ENCODE measurements at regions of chr1 and their contacts with region 1.

Region 1: DNA sequence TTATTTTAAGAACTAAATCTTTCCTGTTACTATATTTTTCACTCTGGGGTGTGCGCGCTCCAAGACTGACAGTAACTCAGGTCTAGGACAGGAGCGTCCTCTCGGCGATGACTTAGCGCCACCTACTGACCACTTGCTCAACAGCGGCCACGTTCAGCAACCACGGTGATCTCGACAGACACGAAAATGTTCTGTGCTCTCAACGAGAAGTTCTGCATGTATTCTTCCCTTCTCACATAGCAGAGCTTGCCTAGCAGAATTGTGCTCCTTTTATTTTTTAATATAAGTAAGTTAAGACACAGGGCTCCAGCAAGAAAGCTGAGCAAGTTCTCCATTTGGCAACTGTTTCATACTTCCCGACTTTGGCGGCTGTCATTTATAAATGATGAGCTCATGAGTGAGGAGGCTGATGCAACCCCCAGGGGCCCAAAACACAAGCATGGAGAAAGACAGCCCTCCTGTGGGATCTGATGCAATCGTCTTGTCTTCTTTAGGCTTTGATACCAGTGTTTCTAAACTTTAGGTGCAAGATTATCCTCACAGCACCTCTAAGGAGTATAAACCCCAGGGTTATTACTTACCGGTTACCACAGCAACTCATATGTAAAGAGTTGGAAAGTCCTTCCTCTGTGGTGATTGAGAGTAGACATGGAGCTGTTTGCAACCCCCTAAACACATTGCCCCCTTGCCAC is 92.6 kb downstream of the HHIPL2 start:
- DNase-seq: peak; percentile 97
- H3K4me3 Mint-ChIP-seq: peak overlapping the region; percentile 37
- H3K27ac Mint-ChIP-seq: peak overlapping the region; percentile 54
- H3K4me1 Mint-ChIP-seq: peaks cover 16% of the 10 kb centered on the region
- H3K27me3 Mint-ChIP-seq: no peaks in the 10 kb centered on the region
- CTCF ChIP-seq: peak; percentile 100

Region 2: GRCh38 chr1:220873868-220874655 is 1581.3 kb before region 1 on chr1:
- CTCF ChIA-PET with region 1: interaction called, 12 read pairs
- POLR2A ChIA-PET with region 1: interaction called, 3 read pairs
- intact Hi-C with region 1: loop called (anchors 1 kb)
- DNase-seq: peak; percentile 74
- H3K4me3 Mint-ChIP-seq: no peak overlapping the region
- H3K27ac Mint-ChIP-seq: no peak overlapping the region
- H3K4me1 Mint-ChIP-seq: no peaks in the 10 kb centered on the region
- H3K27me3 Mint-ChIP-seq: no peaks in the 10 kb centered on the region
- CTCF ChIP-seq: peak; percentile 99

Region 3: GRCh38 chr1:221543529-221544120 is 911.7 kb before region 1 on chr1:
- CTCF ChIA-PET with region 1: interaction called, 35 read pairs
- POLR2A ChIA-PET with region 1: no interaction called
- intact Hi-C with region 1: loop called (anchors 1 kb)
- DNase-seq: peak; percentile 56
- H3K4me3 Mint-ChIP-seq: no peak overlapping the region
- H3K27ac Mint-ChIP-seq: peak overlapping the region; percentile 44
- H3K4me1 Mint-ChIP-seq: peaks cover 15% of the 10 kb centered on the region
- H3K27me3 Mint-ChIP-seq: no peaks in the 10 kb centered on the region
- CTCF ChIP-seq: peak; percentile 86

Region 4: DNA sequence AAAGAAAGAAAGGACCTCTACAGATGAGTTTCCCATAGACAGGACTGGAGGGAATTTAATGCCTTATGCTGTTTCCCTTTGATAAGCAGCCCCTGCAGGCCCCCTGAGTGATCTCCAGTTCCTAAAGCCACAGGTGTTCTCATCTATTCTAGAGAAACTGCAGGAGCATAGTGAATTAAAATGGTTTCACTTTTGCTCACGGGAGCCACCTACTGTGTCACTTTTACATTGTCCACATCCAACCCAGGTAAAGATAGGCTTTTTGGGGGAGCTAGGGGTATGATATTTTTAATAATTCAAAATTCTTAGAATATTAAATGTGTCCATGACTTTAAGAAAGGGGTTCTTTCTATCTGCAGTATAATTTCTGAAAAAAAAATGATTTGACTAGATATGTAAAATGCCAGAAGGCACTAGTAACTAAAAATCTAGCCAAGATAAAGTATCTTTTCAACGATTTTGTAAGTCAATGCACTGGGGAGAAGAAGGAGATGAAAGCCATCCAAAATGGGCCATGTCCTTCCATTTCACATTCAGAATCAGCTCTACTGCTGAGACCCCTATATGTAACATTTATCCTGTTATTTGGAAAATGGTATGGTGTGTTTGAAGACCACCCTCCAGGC is 446.1 kb before region 1 on chr1:
- CTCF ChIA-PET with region 1: interaction called, 38 read pairs
- POLR2A ChIA-PET with region 1: no interaction called
- intact Hi-C with region 1: loop called (anchors 1 kb)
- DNase-seq: peak; percentile 77
- H3K4me3 Mint-ChIP-seq: no peak overlapping the region
- H3K27ac Mint-ChIP-seq: peak overlapping the region; percentile 24
- H3K4me1 Mint-ChIP-seq: no peaks in the 10 kb centered on the region
- H3K27me3 Mint-ChIP-seq: no peaks in the 10 kb centered on the region
- CTCF ChIP-seq: peak; percentile 86

Region 5: GRCh38 chr1:222171005-222171404 is 284.3 kb before region 1 on chr1:
- CTCF ChIA-PET with region 1: interaction called, 43 read pairs
- POLR2A ChIA-PET with region 1: interaction called, 4 read pairs
- intact Hi-C with region 1: loop called (anchors 1 kb)
- DNase-seq: peak; percentile 67
- H3K4me3 Mint-ChIP-seq: no peak overlapping the region
- H3K27ac Mint-ChIP-seq: no peak overlapping the region
- H3K4me1 Mint-ChIP-seq: peaks cover 16% of the 10 kb centered on the region
- H3K27me3 Mint-ChIP-seq: no peaks in the 10 kb centered on the region
- CTCF ChIP-seq: peak; percentile 86

Region 6: GRCh38 chr1:222288040-222288439 is 167.3 kb before region 1 on chr1:
- CTCF ChIA-PET with region 1: interaction called, 28 read pairs
- POLR2A ChIA-PET with region 1: interaction called, 4 read pairs
- intact Hi-C with region 1: loop called (anchors 1 kb)
- DNase-seq: peak; percentile 97
- H3K4me3 Mint-ChIP-seq: peak overlapping the region; percentile 19
- H3K27ac Mint-ChIP-seq: peak overlapping the region; percentile 68
- H3K4me1 Mint-ChIP-seq: peaks cover 35% of the 10 kb centered on the region
- H3K27me3 Mint-ChIP-seq: no peaks in the 10 kb centered on the region
- CTCF ChIP-seq: peak; percentile 15

Region 7: GRCh38 chr1:222465211-222466041 is 10.1 kb after region 1 on chr1:
- CTCF ChIA-PET with region 1: interaction called, 66 read pairs
- POLR2A ChIA-PET with region 1: interaction called, 6 read pairs
- intact Hi-C with region 1: no loop called
- DNase-seq: peak; percentile 98
- H3K4me3 Mint-ChIP-seq: peak overlapping the region; percentile 67
- H3K27ac Mint-ChIP-seq: peak overlapping the region; percentile 92
- H3K4me1 Mint-ChIP-seq: peaks cover 14% of the 10 kb centered on the region
- H3K27me3 Mint-ChIP-seq: no peaks in the 10 kb centered on the region
- CTCF ChIP-seq: peak; percentile 100

Region 8: DNA sequence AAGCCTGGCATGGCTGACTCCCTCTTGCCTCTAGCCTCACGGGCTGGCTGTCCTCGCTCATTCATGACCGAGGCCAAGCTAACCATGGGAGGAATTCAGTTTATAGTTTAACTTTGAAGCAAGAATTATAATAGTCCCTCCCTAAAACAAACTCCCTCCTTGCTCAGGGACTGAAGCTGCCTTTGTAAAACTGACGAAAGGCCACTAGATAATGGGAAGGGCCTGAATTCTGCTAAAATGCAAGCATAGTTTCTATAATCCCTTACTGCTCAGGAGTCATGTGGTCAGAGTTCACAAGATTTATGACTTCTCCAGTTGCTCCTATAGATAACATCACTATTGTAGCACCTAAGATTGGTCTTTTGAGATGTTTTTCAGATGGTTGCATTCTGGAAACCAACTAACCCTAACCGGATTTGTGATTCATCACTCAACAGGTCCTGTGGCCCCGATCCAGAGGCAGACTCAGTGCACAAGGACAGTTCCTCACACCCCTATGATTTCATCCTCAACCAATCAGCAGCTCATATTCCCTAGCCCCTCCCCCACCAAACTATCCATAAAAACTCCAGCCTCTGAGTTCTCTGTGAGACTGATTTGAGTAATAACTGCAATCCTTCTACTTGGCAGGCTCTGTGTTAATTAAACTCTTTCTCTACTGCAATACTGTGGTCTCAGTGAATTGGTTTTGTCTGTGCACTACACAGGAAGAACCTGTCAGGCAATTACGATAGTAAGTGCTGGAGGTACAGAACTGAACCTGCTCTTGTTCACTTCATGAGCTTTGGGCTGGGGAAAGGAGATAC is 66.2 kb after region 1 on chr1:
- CTCF ChIA-PET with region 1: no interaction called
- POLR2A ChIA-PET with region 1: no interaction called
- intact Hi-C with region 1: no loop called
- DNase-seq: peak; percentile 93
- H3K4me3 Mint-ChIP-seq: no peak overlapping the region
- H3K27ac Mint-ChIP-seq: peak overlapping the region; percentile 25
- H3K4me1 Mint-ChIP-seq: peaks cover 20% of the 10 kb centered on the region
- H3K27me3 Mint-ChIP-seq: no peaks in the 10 kb centered on the region
- CTCF ChIP-seq: no peak

Region 9: GRCh38 chr1:222754366-222755139 is 299.2 kb after region 1 on chr1:
- CTCF ChIA-PET with region 1: no interaction called
- POLR2A ChIA-PET with region 1: no interaction called
- intact Hi-C with region 1: no loop called
- DNase-seq: peak; percentile 98
- H3K4me3 Mint-ChIP-seq: peak overlapping the region; percentile 46
- H3K27ac Mint-ChIP-seq: peak overlapping the region; percentile 86
- H3K4me1 Mint-ChIP-seq: peaks cover 28% of the 10 kb centered on the region
- H3K27me3 Mint-ChIP-seq: no peaks in the 10 kb centered on the region
- CTCF ChIP-seq: no peak

Region 10: DNA sequence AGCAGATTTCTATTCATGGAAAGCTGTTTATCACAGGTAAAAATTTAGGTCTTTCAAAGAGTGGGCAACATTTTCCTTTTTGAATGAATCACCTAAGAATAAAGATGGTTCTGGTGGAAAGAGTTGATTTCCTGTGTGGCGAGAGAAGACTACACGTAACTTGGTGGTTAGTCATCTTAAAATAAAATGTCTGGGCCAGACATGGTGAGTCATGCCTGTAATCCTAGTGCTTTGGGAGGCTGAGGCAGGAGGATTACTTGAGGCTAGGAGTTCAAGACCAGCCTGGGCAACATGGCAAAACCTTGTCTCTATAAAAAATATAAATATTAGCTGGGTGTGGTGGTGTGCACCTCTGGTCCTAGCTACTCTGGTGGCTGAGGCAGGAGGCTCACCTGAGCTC is 425.3 kb after region 1 on chr1:
- CTCF ChIA-PET with region 1: no interaction called
- POLR2A ChIA-PET with region 1: no interaction called
- intact Hi-C with region 1: no loop called
- DNase-seq: peak; percentile 71
- H3K4me3 Mint-ChIP-seq: no peak overlapping the region
- H3K27ac Mint-ChIP-seq: no peak overlapping the region
- H3K4me1 Mint-ChIP-seq: peaks cover 10% of the 10 kb centered on the region
- H3K27me3 Mint-ChIP-seq: no peaks in the 10 kb centered on the region
- CTCF ChIP-seq: no peak

Measured in MCF 10A (cell line).